Transverse colon (tissue), 4 donors: ENCODE measurements at regions of chr10 and their contacts with region 1.

Region 1: DNA sequence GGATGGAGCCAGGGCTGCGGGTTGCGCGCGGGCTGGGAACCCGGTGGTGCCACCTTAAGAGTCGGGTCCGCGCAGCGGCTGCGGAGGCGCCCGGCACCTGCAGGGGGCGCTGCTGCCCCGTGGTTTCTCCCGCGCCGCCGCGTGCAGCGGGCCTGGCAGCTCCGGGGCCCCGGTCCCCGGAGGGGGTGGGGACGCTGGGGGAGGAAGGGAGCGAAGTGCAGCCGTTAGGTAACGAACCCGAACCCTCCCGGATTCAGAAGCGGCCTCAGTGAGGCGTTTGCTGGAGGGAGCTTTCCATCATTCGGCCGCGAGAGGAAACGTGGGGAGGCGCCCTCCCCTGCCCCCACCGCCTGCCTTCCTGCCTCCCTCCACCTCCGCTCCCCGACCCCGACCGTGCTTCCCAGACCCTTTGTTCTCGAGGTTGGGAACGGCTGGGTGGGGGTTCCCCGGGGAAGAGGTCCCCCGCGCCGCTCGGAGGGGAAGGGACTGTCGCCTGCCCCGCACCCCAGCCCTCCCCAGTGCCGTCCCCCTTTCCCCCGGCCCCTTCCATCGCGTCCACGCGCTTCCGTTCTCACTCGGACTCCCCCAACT is 29.6 kb downstream of the SKIDA1 start:
- DNase-seq: peak; percentile 84
- H3K4me3 ChIP-seq: peak overlapping the region; percentile 28 to 62 (median 48)
- H3K27ac ChIP-seq: peak overlapping the region; percentile 11 to 60 (median 58)
- H3K4me1 ChIP-seq: peaks cover 0 to 43% (median 31%) of the 10 kb centered on the region in 4 donors
- H3K27me3 ChIP-seq: peaks cover 78% of the 10 kb centered on the region
- CTCF ChIP-seq: peak; percentile 78 to 99 (median 97)
- EP300 ChIP-seq: no peak
- POLR2A ChIP-seq: no peak

Region 2: DNA sequence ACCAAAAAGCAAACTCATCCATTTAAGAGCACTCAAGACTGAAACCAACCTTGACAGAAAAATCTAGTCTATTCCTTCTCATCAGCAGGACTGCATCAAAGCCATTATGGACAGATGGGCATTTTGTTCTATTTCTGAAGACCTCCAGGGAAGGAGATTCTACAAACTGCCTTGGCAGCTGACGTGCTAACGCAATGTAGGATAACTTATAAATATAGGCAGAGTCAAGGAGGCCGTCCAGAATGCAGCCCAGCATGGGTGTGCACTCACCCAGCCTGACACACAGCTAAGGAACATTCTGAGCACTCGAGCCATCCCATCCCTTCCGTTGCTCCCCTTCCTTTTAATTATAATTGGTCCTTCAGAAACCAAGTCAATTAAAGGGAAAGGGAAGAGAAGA is 573.4 kb before region 1 on chr10:
- in situ Hi-C with region 1: no loop called
- intact Hi-C with region 1: no loop called
- DNase-seq: no peak
- H3K4me3 ChIP-seq: no peak overlapping the region
- H3K27ac ChIP-seq: no peak overlapping the region
- H3K4me1 ChIP-seq: no peaks in the 10 kb centered on the region
- H3K27me3 ChIP-seq: no peaks in the 10 kb centered on the region
- CTCF ChIP-seq: no peak
- EP300 ChIP-seq: no peak
- POLR2A ChIP-seq: no peak

Region 3: DNA sequence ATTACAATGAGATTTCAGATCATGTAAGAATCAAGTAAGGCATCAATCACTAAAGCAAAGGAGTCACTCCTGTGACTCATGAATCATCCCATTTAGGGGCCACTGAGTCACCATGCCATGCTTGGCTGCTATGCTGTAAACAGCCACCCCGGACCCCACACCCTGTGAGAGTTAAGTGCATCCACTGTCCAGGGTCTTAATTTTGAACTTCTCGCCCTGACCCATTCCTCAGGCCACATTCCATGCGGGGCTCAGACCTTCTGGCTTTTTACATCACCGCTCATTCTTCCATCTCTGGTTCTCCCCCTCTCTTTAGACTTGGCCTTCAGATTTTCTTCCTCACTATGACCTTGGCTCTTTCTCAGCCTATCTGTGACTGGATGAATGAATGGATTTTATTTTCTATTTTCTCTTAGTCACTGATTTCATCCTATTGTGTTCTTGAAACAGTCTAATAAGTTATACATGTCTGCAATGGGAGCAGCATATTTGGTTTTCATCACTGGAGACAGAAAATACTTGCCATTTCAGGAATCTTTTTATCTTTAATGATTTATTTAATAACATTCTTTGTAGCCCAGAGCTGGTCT is 210.0 kb before region 1 on chr10:
- in situ Hi-C with region 1: loop called in 2 of 4 experiments (anchors 10 to 25 kb)
- intact Hi-C with region 1: loop called (anchors 10 kb)
- DNase-seq: no peak
- H3K4me3 ChIP-seq: no peak overlapping the region
- H3K27ac ChIP-seq: no peak overlapping the region
- H3K4me1 ChIP-seq: no peaks in the 10 kb centered on the region
- H3K27me3 ChIP-seq: no peaks in the 10 kb centered on the region
- CTCF ChIP-seq: no peak
- EP300 ChIP-seq: no peak
- POLR2A ChIP-seq: no peak

Region 4: GRCh38 chr10:21626457-21627161 is 130.8 kb after region 1 on chr10:
- in situ Hi-C with region 1: no loop called
- intact Hi-C with region 1: no loop called
- DNase-seq: no peak
- H3K4me3 ChIP-seq: no peak overlapping the region
- H3K27ac ChIP-seq: no peak overlapping the region
- H3K4me1 ChIP-seq: peaks cover 0 to 11% (median 2%) of the 10 kb centered on the region in 4 donors
- H3K27me3 ChIP-seq: no peaks in the 10 kb centered on the region
- CTCF ChIP-seq: no peak
- EP300 ChIP-seq: no peak
- POLR2A ChIP-seq: no peak

Region 5: DNA sequence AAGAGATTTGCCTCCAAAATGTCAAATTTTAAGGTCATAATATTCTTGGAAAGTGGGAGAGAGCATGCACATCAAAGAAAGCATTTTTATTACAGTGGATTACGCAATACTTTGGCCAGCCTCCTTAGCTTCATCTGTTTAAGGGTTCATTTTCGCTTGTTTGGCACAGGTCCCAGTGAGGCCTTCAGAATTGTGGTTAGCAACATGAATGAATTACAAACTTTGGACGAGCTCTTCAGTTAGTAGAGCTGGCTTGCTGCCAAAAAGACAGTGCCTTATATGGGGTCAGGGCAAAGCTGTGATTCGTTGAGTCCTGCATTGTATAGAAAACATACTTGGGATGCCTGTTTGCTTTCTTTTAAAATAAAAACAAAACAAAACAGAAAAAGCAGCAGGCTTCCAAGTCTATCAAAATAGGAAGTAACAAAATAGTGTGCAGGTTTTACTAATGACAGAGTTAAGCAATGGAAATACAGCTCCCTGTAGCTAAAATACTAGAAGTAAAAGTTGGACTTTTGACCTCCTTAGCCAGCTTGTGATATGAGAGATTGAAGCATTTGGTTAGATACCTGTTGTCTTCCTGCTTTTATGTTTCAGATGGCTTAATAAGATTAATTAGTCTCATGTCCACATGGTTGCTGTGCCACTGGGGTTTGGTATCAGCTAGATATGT is 229.0 kb after region 1 on chr10:
- in situ Hi-C with region 1: loop called (anchors 10 kb)
- intact Hi-C with region 1: loop called (anchors 5 kb)
- DNase-seq: peak; percentile 89
- H3K4me3 ChIP-seq: no peak overlapping the region
- H3K27ac ChIP-seq: peak overlapping the region in 2 of 4 donors; percentile 7 to 49
- H3K4me1 ChIP-seq: peaks cover 12 to 35% (median 24%) of the 10 kb centered on the region in 4 donors
- H3K27me3 ChIP-seq: no peaks in the 10 kb centered on the region
- CTCF ChIP-seq: no peak
- EP300 ChIP-seq: no peak
- POLR2A ChIP-seq: no peak

Region 6: GRCh38 chr10:21926949-21927348 is 431.1 kb after region 1 on chr10:
- in situ Hi-C with region 1: loop called in 1 of 4 experiments (anchors 25 kb)
- intact Hi-C with region 1: no loop called
- DNase-seq: no peak
- H3K4me3 ChIP-seq: no peak overlapping the region
- H3K27ac ChIP-seq: no peak overlapping the region
- H3K4me1 ChIP-seq: peaks cover 0 to 2% (median 0%) of the 10 kb centered on the region in 4 donors
- H3K27me3 ChIP-seq: no peaks in the 10 kb centered on the region
- CTCF ChIP-seq: no peak
- EP300 ChIP-seq: no peak
- POLR2A ChIP-seq: no peak

Region 7: GRCh38 chr10:22988581-22989360 is 1492.9 kb after region 1 on chr10:
- in situ Hi-C with region 1: loop called in 3 of 4 experiments (anchors 10 to 25 kb)
- intact Hi-C with region 1: no loop called
- DNase-seq: peak; percentile 56
- H3K4me3 ChIP-seq: no peak overlapping the region
- H3K27ac ChIP-seq: no peak overlapping the region
- H3K4me1 ChIP-seq: no peaks in the 10 kb centered on the region
- H3K27me3 ChIP-seq: peaks cover 6% of the 10 kb centered on the region
- CTCF ChIP-seq: peak; percentile 87 to 96 (median 91)
- EP300 ChIP-seq: no peak
- POLR2A ChIP-seq: no peak